Posterior vena cava (tissue), 2 donors: ENCODE measurements at regions of chr4 and their contacts with region 1.

Region 1: GRCh38 chr4:42865572-42866189 is 26.8 kb upstream of the GRXCR1 start:
- DNase-seq: no peak

Region 2: DNA sequence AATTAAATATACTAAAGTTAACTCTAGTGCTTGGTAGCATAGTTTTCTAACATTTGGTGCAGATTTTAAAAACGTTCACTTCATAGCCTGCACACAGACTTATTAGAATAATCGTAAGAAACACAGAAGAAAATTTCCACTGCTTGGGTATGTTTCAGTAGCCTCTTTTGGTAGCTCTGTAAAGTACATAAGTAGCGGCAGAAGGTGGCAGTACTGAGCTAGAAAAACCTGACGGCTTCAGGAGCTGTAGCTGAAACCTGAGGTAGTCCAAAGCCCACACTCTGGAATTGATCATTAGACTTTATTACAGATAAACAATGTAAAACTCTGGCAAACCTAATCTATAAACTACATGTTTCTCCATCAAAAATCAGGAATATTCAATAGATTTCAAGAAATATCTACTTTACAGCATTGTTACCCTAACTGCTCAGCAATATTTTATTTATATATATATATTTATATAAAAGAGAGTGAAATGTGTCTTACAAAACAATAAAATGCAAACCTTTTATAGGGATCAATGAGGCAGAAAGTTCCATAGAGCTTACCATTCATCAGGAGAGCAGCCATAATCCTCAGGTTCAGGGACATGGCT is 297.0 kb before region 1 on chr4:
- intact Hi-C with region 1: loop called (anchors 2 to 5 kb)
- DNase-seq: no peak